HepG2 (cell line): ENCODE measurements at regions of chr7 and their contacts with region 1.

Region 1: GRCh38 chr7:116802746-116803152 is 59.6 kb upstream of the CAPZA2 start:
- DNase-seq: peak; percentile 56
- ATAC-seq: peak; percentile 12; the same call in 2 of the 3 replicates
- H3K4me3 ChIP-seq: no peak overlapping the region
- H3K27ac ChIP-seq: peak overlapping the region; percentile 14
- H3K4me1 ChIP-seq: peaks cover 77% of the 10 kb centered on the region
- H3K27me3 ChIP-seq: no peaks in the 10 kb centered on the region
- CTCF ChIP-seq: peak; percentile 64
- EP300 ChIP-seq: peak in 1 of 2 experiments; percentile 36; a peak in 1 of 4 replicates
- POLR2A ChIP-seq: no peak
- RAD21 ChIP-seq: no peak

Region 2: GRCh38 chr7:116687801-116688201 is 114.9 kb before region 1 on chr7:
- CTCF ChIA-PET with region 1: no interaction called
- POLR2A ChIA-PET with region 1: no interaction called
- in situ Hi-C with region 1: no loop called
- intact Hi-C with region 1: loop called (anchors 5 kb)
- DNase-seq: peak; percentile 10
- ATAC-seq: peak; percentile 25; the same call in 1 of the 3 replicates
- H3K4me3 ChIP-seq: no peak overlapping the region
- H3K27ac ChIP-seq: peak overlapping the region; percentile 47
- H3K4me1 ChIP-seq: peaks cover 47% of the 10 kb centered on the region
- H3K27me3 ChIP-seq: no peaks in the 10 kb centered on the region
- CTCF ChIP-seq: no peak
- EP300 ChIP-seq: no peak
- POLR2A ChIP-seq: no peak
- RAD21 ChIP-seq: no peak